MCF 10A (cell line): ENCODE measurements at regions of chr14 and their contacts with region 1.

Region 1: DNA sequence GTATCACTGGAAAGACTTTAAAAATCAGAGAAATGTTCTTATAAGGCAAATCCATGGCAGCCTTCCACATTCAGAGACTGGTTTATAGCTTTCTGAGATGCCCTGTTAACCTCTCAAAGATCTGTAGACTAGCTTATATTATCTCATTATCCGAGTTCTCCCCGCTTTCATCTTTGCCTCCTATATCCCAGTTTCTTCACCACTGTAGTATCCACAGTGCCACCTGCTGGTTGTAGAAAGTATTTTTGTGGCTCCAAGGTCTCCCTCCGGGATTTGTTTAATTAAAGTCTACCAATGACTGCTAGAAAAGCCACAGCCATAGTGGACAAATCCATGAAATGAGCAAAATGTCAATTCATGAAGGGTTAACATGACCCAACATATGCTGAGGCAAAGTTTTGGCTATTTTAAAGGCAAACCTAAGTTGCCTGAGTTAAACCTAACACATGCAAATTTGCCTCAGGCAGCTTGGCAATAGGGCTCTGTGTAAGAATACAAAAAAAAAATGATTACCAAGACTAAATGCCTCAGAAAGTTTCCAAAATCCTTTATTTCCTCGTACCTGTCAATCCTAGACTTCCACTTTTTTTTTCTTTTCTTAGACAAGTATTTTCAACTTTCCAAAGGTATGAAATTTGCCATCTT is 218.8 kb upstream of the BMP4 start:
- DNase-seq: peak; percentile 84
- H3K4me3 Mint-ChIP-seq: no peak overlapping the region
- H3K27ac Mint-ChIP-seq: no peak overlapping the region
- H3K4me1 Mint-ChIP-seq: peaks cover 30% of the 10 kb centered on the region
- H3K27me3 Mint-ChIP-seq: no peaks in the 10 kb centered on the region
- CTCF ChIP-seq: peak; percentile 80

Region 2: GRCh38 chr14:53663709-53664108 is 511.7 kb before region 1 on chr14:
- CTCF ChIA-PET with region 1: no interaction called
- POLR2A ChIA-PET with region 1: no interaction called
- intact Hi-C with region 1: loop called (anchors 10 kb)
- DNase-seq: peak; percentile 26
- H3K4me3 Mint-ChIP-seq: no peak overlapping the region
- H3K27ac Mint-ChIP-seq: no peak overlapping the region
- H3K4me1 Mint-ChIP-seq: peaks cover 7% of the 10 kb centered on the region
- H3K27me3 Mint-ChIP-seq: no peaks in the 10 kb centered on the region
- CTCF ChIP-seq: no peak

Region 3: DNA sequence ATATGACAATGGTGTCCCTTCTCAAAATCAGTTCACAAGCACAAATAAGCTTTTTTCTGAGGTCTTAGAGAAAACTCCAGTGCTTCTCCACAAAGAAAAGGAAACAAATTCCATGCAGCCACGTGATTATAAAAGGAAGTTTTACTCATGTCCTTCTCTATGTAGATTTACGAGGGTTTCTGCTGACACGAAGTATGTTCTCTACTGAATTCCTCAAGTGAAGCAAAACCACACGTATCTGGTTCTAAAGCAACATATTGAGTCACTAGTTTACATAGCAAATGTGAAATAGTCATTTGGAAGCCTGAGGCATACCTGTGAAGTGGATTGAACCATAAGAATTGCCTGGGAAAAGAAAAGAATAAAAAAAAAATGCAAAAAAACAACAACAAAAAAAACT is 250.7 kb before region 1 on chr14:
- CTCF ChIA-PET with region 1: interaction called, 8 read pairs
- POLR2A ChIA-PET with region 1: interaction called, 3 read pairs
- intact Hi-C with region 1: loop called (anchors 2 kb)
- DNase-seq: peak; percentile 86
- H3K4me3 Mint-ChIP-seq: peak overlapping the region; percentile 30
- H3K27ac Mint-ChIP-seq: peak overlapping the region; percentile 92
- H3K4me1 Mint-ChIP-seq: peaks cover 28% of the 10 kb centered on the region
- H3K27me3 Mint-ChIP-seq: no peaks in the 10 kb centered on the region
- CTCF ChIP-seq: no peak

Region 4: DNA sequence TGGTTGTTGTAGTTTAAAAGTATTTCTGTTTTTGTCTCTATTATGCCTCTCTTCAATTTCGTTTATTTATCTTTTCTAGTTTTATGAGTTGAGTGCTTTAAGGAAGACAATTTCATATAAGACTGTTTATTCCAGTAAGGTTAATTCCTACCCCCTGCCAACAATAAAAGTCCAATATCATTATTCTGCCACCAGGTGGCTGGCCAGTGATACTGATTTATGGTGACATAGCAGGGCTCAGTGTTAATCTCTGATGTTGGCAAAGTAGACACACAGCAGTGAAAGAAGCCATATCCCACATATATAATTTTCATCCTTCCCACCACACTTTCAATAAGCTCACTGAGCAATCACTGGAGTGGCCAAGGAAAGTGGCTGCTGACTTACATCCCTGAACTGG is 149.8 kb before region 1 on chr14:
- CTCF ChIA-PET with region 1: interaction called, 8 read pairs
- POLR2A ChIA-PET with region 1: no interaction called
- intact Hi-C with region 1: loop called (anchors 1 kb)
- DNase-seq: peak; percentile 65
- H3K4me3 Mint-ChIP-seq: no peak overlapping the region
- H3K27ac Mint-ChIP-seq: no peak overlapping the region
- H3K4me1 Mint-ChIP-seq: no peaks in the 10 kb centered on the region
- H3K27me3 Mint-ChIP-seq: no peaks in the 10 kb centered on the region
- CTCF ChIP-seq: peak; percentile 36

Region 5: DNA sequence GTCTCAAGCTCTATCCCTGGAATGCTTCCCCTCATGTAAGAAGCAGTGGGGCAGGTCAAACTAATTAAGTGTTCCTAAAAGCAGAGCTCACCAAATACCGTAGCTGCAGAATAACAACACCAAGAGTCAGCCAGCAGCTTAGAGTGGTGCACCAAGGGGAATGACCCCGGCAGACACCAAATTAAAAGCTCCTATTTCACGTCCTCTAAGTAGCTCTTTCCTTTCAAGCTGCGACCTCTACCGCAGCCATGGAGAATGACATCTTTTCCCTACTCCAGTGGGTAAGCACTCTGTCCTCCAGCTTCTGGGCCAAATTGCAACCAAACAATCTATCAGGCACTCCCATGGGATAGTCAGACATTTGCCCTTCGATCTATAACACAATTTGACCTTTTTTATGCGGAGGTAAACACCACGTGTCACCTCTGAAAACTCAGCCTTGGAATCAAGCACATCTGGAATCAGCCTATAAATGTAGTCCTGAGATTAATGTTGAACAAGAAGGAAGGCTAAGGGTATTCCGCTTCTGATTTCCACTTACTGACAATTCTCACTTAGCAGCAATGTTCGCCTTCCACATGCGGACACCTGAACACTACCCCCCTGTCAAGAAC is 153.8 kb after region 1 on chr14:
- CTCF ChIA-PET with region 1: interaction called, 27 read pairs
- POLR2A ChIA-PET with region 1: interaction called, 6 read pairs
- intact Hi-C with region 1: loop called (anchors 1 kb)
- DNase-seq: peak; percentile 74
- H3K4me3 Mint-ChIP-seq: no peak overlapping the region
- H3K27ac Mint-ChIP-seq: no peak overlapping the region
- H3K4me1 Mint-ChIP-seq: peaks cover 6% of the 10 kb centered on the region
- H3K27me3 Mint-ChIP-seq: no peaks in the 10 kb centered on the region
- CTCF ChIP-seq: peak; percentile 88